ENCODE measurements at regions of chr12 and their contacts with region 1.

Region 1: DNA sequence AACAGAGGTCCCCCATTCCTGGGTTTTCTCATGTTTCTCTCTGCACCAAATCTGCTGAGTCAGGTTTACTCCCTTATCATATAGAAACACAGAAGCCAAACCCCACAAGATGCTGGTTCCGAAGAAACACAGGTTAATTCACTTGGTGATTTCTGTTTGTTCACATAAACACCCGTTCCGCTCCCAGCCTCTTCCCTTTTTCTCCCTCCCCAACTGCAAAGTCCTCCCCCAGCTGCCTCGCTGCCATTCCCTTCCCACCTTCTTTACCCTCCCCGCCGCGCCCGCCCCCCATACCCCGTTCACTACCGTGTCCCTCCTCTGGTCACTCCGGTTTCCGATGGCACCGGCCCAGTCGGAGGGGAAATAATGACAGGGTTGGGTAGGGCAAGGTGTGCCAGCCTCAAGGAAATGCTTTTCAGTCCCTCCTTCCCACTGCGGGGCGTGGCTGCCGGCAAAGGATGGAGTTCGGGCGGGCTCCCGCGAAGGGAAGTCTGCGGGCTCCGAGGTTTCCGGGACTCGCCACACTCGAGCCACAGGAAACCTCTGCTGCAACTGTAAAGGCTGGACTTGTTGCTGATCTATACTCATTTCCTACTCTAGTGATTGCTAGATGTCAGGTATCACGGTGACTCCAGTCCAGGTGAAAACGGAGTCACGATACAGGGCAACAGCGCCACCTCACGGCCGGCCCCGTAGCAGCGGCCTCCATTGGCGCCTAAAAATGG is at the start of gene STYK1:
- DNase-seq: peak; percentile 87
- H3K4me3 ChIP-seq: peak within 1 kb of the TSS; percentile 70 to 82 (median 76)
- H3K27ac ChIP-seq: peak within 1 kb of the TSS; percentile 64
- H3K4me1 ChIP-seq: peaks cover 4% of the 10 kb centered on the region
- H3K27me3 ChIP-seq: no peaks in the 10 kb centered on the region
- CTCF ChIP-seq: peak; percentile 93 to 98
- total RNA-seq, gene STYK1: 4.8 to 4.9 TPM

Region 2: DNA sequence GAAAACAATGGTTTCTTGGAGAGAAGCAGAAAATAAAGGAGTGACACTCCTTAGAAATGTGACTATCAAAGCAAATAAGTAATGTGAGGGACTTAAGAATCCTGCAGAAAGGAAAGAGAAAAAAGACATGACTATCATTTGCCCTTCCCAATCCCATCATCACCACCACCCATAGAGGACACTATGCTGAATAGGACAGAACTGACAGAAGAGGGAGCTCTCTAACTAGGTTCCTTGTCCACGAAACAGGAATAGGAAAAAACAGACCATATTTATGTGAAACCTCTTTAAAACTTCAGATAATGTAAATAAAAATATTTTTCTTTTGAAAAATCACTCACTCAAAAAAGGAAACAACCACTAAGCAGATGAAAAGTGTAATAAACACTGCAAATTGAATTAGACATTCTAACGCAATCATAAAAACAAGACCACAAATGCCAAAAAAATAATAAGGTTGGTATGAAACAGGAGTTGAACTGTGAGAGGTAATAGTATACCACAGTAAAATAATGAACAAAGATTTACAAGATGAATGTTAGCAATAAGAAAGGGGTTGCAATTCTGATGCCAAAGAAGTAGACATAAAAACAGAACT is 342.1 kb before region 1 on chr12:
- CTCF ChIA-PET with region 1: no interaction called
- dilution Hi-C with region 1: no loop called
- in situ Hi-C with region 1: no loop called
- intact Hi-C with region 1: loop called (anchors 1 kb)
- DNase-seq: peak; percentile 36
- H3K4me3 ChIP-seq: no peak overlapping the region
- H3K27ac ChIP-seq: no peak overlapping the region
- H3K4me1 ChIP-seq: no peaks in the 10 kb centered on the region
- H3K27me3 ChIP-seq: no peaks in the 10 kb centered on the region
- CTCF ChIP-seq: peak; percentile 81 to 89

Region 3: GRCh38 chr12:10501031-10501430 is 172.8 kb before region 1 on chr12:
- CTCF ChIA-PET with region 1: no interaction called
- dilution Hi-C with region 1: no loop called
- in situ Hi-C with region 1: no loop called
- intact Hi-C with region 1: loop called (anchors 1 kb)
- DNase-seq: peak; percentile 9
- H3K4me3 ChIP-seq: no peak overlapping the region
- H3K27ac ChIP-seq: no peak overlapping the region
- H3K4me1 ChIP-seq: no peaks in the 10 kb centered on the region
- H3K27me3 ChIP-seq: peaks cover 4% of the 10 kb centered on the region
- CTCF ChIP-seq: peak; percentile 40 to 67

Region 4: DNA sequence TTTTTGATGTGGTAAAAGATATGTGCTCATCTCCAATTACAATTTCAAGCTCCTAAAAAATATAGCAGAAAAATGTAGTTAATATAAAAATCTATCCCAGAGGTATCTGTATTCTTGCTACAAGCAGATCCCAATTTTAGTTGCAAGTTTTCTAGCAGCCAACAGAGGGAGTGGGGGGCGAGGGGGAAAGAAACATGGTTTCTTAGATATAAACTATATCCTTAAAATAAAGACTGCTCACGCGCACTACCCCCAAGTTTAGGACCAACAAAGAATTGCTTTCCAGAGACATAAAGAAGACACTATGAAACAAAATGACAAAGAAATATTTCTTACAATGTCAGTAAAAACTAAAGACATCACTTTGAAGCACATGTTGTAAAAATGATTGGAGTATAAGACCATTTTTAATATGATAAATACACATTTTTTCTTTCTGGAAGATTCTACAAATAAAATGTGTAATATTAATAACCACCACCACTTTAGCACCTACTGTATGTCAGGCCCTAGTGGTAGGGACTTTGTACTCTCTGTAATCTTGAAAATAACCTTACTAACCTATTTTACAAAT is 65.8 kb before region 1 on chr12:
- CTCF ChIA-PET with region 1: no interaction called
- dilution Hi-C with region 1: no loop called
- in situ Hi-C with region 1: no loop called
- intact Hi-C with region 1: loop called (anchors 1 kb)
- DNase-seq: no peak
- H3K4me3 ChIP-seq: no peak overlapping the region
- H3K27ac ChIP-seq: no peak overlapping the region
- H3K4me1 ChIP-seq: peaks cover 12% of the 10 kb centered on the region
- H3K27me3 ChIP-seq: no peaks in the 10 kb centered on the region
- CTCF ChIP-seq: peak; percentile 5 to 27

Region 5: GRCh38 chr12:10749700-10750384 is 76.0 kb after region 1 on chr12:
- CTCF ChIA-PET with region 1: no interaction called
- dilution Hi-C with region 1: no loop called
- in situ Hi-C with region 1: no loop called
- intact Hi-C with region 1: loop called (anchors 1 kb)
- DNase-seq: peak; percentile 90
- H3K4me3 ChIP-seq: peak overlapping the region; percentile 6 to 34 (median 11)
- H3K27ac ChIP-seq: peak overlapping the region; percentile 51
- H3K4me1 ChIP-seq: peaks cover 7% of the 10 kb centered on the region
- H3K27me3 ChIP-seq: no peaks in the 10 kb centered on the region
- CTCF ChIP-seq: peak; percentile 90 to 93

Measured in mammary epithelial cell (primary cell).